Activated CD8-positive, alpha-beta memory T cell treated with anti-CD3 and anti-CD28 coated beads, Interleukin-2, amount 10 ng/mL, durations not matched to agents 7 days and 5 days (primary cell): ENCODE measurements at regions of chr21 and their contacts with region 1.

Region 1: DNA sequence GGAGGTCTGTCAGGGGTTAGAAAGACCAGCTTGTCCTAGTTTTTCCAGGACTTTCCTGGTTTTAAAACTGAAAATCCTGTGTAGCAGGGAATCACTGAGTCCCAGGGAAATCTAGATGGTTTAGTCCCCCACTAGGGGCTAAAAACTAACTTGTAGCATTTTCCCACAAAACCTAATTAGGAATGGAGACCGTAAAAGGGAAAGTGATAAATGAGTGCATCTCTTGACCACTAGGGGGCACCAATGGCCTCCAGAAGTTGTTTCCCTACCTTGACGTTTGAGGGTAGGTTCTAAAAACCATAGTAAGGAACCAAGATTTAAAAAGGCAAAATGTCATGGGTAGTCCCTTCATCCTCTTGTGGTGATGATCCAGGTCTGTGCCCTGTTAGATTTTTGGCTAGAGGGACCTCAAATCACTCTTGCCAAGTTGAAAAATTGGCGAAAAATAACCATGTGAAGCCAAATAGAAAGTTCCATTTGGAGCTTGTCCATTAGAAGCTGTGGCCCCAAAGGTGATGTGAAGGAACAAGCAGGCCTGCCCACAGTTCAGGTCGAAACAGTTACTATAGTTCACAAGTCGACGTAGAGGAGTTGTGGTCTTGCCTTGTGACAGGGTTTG is 24.5 kb downstream of the CLIC6 start:
- DNase-seq: peak; percentile 51
- ATAC-seq: no peak
- H3K4me3 Mint-ChIP-seq: no peak overlapping the region
- H3K27ac Mint-ChIP-seq: no peak overlapping the region
- H3K4me1 Mint-ChIP-seq: no peaks in the 10 kb centered on the region
- H3K27me3 Mint-ChIP-seq: peaks cover 67% of the 10 kb centered on the region

Region 2: DNA sequence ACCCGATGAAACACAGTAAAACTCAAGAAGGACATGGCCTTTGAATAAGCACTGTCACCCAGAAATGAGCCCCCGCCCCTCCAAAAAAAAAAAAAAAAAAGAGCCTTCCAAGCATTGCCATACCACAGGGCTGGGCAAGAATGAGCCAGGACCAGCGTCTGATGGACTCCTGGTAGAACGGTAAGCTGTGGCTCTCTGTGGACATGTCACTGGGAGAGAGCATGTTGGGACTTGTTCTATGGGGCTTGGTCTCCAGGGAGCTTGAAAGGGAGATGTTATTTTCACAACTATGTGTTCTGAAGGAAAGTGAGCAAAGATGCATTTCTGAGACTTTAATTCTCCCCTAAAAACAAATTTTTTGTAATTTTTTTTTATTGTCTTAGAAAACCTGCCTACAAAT is 18.1 kb before region 1 on chr21:
- CTCF ChIA-PET with region 1: no interaction called
- DNase-seq: no peak
- ATAC-seq: no peak
- H3K4me3 Mint-ChIP-seq: no peak overlapping the region
- H3K27ac Mint-ChIP-seq: no peak overlapping the region
- H3K4me1 Mint-ChIP-seq: peaks cover 7% of the 10 kb centered on the region
- H3K27me3 Mint-ChIP-seq: peaks cover 78% of the 10 kb centered on the region

Region 3: DNA sequence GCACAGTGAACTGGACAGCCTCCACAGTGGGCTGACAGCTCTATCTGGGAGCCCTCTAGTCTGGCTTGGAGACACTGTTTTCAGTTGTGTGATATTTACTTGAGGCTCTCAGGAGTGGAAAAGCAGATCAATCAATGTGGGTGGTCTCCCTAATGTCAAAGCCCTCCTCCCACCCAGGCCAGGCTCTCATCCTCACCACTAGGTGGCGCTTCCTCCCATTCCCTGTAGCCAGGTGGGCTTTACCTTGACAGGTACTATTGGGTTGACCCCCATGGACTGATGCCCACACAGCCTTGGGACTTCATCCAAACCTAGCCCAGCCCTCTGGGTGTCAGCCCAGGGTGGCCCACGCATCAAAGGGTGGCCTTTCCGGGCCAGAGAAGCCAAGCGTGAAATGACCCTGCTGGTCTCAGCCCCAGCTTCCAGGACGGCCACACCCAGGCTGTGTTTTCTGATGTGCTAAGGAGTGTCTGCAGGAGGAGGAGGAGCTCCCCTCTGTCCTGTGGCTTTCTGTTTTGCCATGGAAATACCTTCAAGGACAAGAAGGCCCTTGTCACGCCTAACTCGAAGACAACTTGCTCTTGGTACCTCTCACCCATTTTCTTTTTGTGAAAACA is 29.5 kb after region 1 on chr21:
- CTCF ChIA-PET with region 1: interaction called, 17 read pairs
- DNase-seq: no peak
- ATAC-seq: no peak
- H3K4me3 Mint-ChIP-seq: no peak overlapping the region
- H3K27ac Mint-ChIP-seq: no peak overlapping the region
- H3K4me1 Mint-ChIP-seq: peaks cover 12% of the 10 kb centered on the region
- H3K27me3 Mint-ChIP-seq: peaks cover 41% of the 10 kb centered on the region

Region 4: GRCh38 chr21:36028127-36029069 is 1335.1 kb after region 1 on chr21:
- CTCF ChIA-PET with region 1: interaction called, 10 read pairs
- DNase-seq: peak; percentile 75
- ATAC-seq: peak; percentile 85
- H3K4me3 Mint-ChIP-seq: no peak overlapping the region
- H3K27ac Mint-ChIP-seq: no peak overlapping the region
- H3K4me1 Mint-ChIP-seq: peaks cover 5% of the 10 kb centered on the region
- H3K27me3 Mint-ChIP-seq: no peaks in the 10 kb centered on the region